ENCODE measurements at regions of chr10 and their contacts with region 1.

Region 1: GRCh38 chr10:30818010-30818531 is 188.5 kb upstream of the LYZL2 start:
- DNase-seq: peak; percentile 87 to 88
- ATAC-seq: peak; percentile 20
- H3K4me3 ChIP-seq: no peak overlapping the region
- H3K27ac ChIP-seq: peak overlapping the region; percentile 89
- H3K4me1 ChIP-seq: peaks cover 2% of the 10 kb centered on the region in 2 donors
- H3K27me3 ChIP-seq: no peaks in the 10 kb centered on the region

Region 2: DNA sequence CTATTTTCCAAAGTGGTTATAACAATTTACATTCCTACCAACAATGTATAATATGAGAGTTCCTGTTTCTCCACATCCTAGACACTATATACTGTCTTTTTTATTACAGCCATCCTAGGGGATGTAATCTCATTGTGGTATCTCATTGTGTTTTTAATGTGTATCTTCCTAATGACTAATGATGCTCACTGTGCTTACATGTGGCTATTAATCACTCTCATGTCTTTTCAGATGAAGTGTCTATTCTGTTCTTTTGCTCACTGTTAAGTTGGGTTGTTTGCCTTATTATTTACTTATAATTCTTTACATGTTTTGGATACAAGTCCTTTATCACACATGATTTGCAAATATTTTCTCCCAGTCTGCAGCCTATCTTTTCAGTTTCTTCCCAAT is 141.8 kb after region 1 on chr10:
- intact Hi-C with region 1: no loop called
- DNase-seq: no peak
- ATAC-seq: no peak
- H3K4me3 ChIP-seq: no peak overlapping the region
- H3K27ac ChIP-seq: no peak overlapping the region
- H3K4me1 ChIP-seq: no peaks in the 10 kb centered on the region
- H3K27me3 ChIP-seq: no peaks in the 10 kb centered on the region

Region 3: DNA sequence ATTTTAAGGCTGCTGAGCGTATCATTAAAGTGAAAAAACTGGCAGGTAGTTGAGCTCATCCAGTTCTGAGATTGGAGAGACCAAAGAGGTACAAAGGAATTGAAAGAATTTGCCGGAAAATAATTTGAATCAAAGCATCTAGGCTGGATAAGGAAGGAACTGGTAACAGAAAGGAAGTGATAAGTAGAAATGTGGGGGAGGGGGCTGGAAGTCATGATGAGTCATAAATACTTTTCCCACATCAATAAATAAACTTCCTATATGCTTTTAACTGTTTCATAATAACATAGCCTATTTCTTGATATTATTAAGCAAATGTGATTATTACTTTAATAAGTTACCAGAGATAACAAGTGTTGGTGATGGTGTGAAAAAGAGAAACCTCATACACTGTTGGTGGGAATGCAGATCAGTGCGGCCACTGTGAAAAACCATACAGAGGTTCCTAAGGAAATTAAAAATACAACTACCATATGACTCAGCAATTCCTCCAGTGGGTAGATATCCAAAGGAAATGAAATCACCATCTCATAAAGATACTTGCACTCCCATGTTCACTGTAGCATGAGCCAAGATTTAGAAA is 186.6 kb after region 1 on chr10:
- intact Hi-C with region 1: loop called in 1 of 2 experiments (anchors 5 kb)
- DNase-seq: no peak
- ATAC-seq: no peak
- H3K4me3 ChIP-seq: no peak overlapping the region
- H3K27ac ChIP-seq: peak overlapping the region; percentile 14 to 17
- H3K4me1 ChIP-seq: peaks cover 5 to 14% of the 10 kb centered on the region in 2 donors
- H3K27me3 ChIP-seq: no peaks in the 10 kb centered on the region